ENCODE measurements at regions of chrX and their contacts with region 1.

Region 1: GRCh38 chrX:123833387-123833786 is 26.5 kb upstream of the XIAP start:
- DNase-seq: peak; percentile 61
- ATAC-seq: peak; percentile 93
- H3K4me3 ChIP-seq: no peak overlapping the region
- H3K27ac ChIP-seq: no peak overlapping the region
- H3K4me1 ChIP-seq: peaks cover 9% of the 10 kb centered on the region; the same call in 1 of the 2 replicates
- H3K27me3 ChIP-seq: no peaks in the 10 kb centered on the region
- CTCF ChIP-seq: peak; percentile 86

Region 2: GRCh38 chrX:123626962-123627361 is 206.4 kb before region 1 on chrX:
- CTCF ChIA-PET with region 1: no interaction called
- POLR2A ChIA-PET with region 1: no interaction called
- in situ Hi-C with region 1: no loop called
- intact Hi-C with region 1: no loop called
- DNase-seq: no peak
- ATAC-seq: no peak
- H3K4me3 ChIP-seq: no peak overlapping the region
- H3K27ac ChIP-seq: no peak overlapping the region
- H3K4me1 ChIP-seq: no peaks in the 10 kb centered on the region
- H3K27me3 ChIP-seq: no peaks in the 10 kb centered on the region
- CTCF ChIP-seq: no peak

Region 3: GRCh38 chrX:123779908-123780396 is 53.4 kb before region 1 on chrX:
- CTCF ChIA-PET with region 1: interaction called, 15 read pairs
- POLR2A ChIA-PET with region 1: no interaction called
- in situ Hi-C with region 1: no loop called
- intact Hi-C with region 1: no loop called
- DNase-seq: no peak
- ATAC-seq: no peak
- H3K4me3 ChIP-seq: no peak overlapping the region
- H3K27ac ChIP-seq: no peak overlapping the region
- H3K4me1 ChIP-seq: no peaks in the 10 kb centered on the region; the same call in 1 of the 2 replicates
- H3K27me3 ChIP-seq: no peaks in the 10 kb centered on the region
- CTCF ChIP-seq: no peak

Region 4: DNA sequence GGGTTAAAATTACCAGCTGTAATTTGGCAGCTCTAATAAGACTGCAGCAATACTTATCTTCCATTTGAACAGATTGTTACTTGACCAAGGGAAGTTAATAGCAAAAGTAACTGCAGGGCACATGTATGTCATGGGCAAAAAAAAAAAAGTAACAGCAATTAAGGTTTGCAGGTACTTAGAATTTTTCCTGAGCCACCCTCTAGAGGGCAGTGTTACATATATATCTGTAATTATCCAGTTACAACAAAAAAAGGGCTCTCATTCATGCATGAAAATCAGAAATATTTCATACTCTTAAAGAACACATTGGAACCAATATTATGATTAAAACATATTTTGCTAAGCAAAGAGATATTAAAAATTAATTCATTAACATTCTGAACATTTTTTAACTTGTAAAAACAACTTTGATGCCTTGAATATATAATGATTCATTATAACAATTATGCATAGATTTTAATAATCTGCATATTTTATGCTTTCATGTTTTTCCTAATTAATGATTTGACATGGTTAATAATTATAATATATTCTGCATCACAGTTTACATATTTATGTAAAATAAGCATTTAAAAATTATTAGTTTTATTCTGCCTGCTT is 51.5 kb after region 1 on chrX:
- CTCF ChIA-PET with region 1: interaction called, 7 read pairs
- POLR2A ChIA-PET with region 1: no interaction called
- in situ Hi-C with region 1: no loop called
- intact Hi-C with region 1: loop called (anchors 2 kb)
- DNase-seq: peak; percentile 10
- ATAC-seq: no peak; the same call in 1 of the 2 replicates
- H3K4me3 ChIP-seq: no peak overlapping the region
- H3K27ac ChIP-seq: no peak overlapping the region
- H3K4me1 ChIP-seq: no peaks in the 10 kb centered on the region; the same call in 1 of the 2 replicates
- H3K27me3 ChIP-seq: no peaks in the 10 kb centered on the region
- CTCF ChIP-seq: no peak; the same call in 1 of the 2 replicates

Region 5: DNA sequence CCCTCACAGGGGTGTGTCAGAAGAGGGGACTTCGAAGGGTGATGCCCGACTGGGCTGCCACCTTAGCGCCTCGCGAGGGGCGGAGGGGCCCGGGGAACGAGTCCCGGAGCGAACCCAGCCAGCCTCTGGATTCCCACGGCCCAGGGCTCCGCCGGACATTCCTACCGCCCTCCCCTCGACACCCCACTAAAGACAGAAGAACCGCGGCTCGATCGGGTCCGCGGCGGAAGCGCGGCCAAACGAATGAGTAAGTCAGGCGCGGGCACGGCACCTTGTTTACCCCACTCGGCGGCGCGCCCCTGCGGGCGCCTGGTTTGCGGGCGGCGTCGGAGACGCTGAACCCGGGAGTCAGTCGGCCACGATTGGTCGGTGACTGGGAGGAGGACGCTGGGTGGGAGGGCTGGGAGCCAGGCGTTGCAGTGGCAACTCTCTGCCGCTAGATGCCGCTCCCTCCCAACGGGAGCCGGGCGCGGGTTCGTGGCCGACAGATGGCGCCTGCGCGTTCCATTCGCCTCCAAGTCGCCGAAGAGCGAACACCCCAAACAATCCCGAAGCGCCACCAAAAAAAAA is 126.7 kb after region 1 on chrX:
- CTCF ChIA-PET with region 1: interaction called, 4 read pairs
- POLR2A ChIA-PET with region 1: no interaction called
- in situ Hi-C with region 1: no loop called
- intact Hi-C with region 1: loop called (anchors 2 kb)
- DNase-seq: peak; percentile 88
- ATAC-seq: peak; percentile 87
- H3K4me3 ChIP-seq: peak overlapping the region; percentile 95 to 98
- H3K27ac ChIP-seq: peak overlapping the region; percentile 99
- H3K4me1 ChIP-seq: peaks cover 19% of the 10 kb centered on the region; the same call in 1 of the 2 replicates
- H3K27me3 ChIP-seq: no peaks in the 10 kb centered on the region
- CTCF ChIP-seq: peak; percentile 96

Region 6: DNA sequence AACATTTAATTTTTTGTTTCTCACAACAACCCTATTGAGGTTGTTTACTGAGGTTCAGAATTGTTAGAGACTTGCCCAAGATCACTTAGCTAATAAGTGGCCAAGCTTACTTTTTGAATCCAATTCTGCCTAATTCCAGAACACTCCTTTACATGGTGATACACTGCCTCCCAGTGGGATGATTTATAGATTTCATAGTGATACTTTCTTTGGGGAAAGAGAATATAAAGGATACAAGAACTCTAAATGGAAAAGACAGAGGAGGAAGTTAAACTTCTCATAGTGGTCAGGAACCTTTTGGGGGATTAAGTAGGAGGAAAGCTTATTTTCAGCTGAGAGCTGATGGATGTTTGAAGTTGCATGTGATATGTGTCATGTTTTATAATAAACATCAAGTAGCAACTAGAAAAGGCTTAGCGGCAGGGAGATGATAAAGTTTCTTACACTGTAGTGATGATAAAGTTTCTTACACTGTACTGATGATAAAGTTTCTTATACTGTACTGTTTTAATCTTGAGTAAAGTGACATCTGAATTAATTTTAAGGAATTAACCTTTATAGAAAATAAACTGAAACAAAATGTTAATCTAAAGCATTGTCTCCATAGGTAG is 143.4 kb after region 1 on chrX:
- CTCF ChIA-PET with region 1: interaction called, 13 read pairs
- POLR2A ChIA-PET with region 1: interaction called, 4 read pairs
- in situ Hi-C with region 1: no loop called
- intact Hi-C with region 1: no loop called
- DNase-seq: no peak
- ATAC-seq: peak; percentile 74; the same call in 1 of the 2 replicates
- H3K4me3 ChIP-seq: no peak overlapping the region
- H3K27ac ChIP-seq: no peak overlapping the region
- H3K4me1 ChIP-seq: peaks cover 35% of the 10 kb centered on the region
- H3K27me3 ChIP-seq: no peaks in the 10 kb centered on the region
- CTCF ChIP-seq: no peak; the same call in 1 of the 2 replicates

Measured in Panc1 (cell line).